ENCODE measurements at regions of chr5 and their contacts with region 1.

Region 1: DNA sequence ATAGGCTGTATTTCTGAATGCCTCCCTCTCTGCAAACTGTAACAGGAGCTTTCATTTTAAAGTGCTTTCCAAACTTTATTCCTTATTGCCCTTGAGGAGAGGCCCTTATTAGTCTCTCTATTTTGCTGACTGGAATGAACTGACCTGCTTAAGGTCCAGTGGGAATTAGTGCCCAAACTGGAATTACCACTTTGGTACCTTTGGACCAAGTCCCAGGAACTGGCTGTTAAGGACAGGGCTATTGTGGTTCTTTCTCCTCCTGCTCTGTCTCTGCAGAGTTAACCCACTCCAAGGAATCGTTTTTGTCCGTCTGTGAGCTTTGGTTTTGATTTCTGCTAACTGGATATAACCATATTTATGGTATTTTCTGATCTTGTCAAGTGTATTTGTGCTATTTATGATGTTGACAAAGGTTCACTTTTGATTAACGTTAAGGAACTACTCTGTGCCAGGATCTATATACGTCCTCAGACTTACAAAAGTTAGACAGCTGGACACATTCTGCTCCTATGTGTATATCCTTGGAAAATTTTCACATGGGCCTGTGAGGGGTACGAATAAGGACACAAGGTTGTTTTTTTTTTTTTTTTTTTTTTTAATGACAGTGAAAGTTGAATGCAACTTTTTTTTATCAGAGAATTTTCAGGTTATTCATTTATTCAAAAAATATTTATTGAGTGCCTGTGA is 189.1 kb upstream of the ANKRD55 start:
- DNase-seq: peak; percentile 60 to 82
- H3K4me3 ChIP-seq: no peak overlapping the region
- H3K27ac ChIP-seq: peak overlapping the region; percentile 2; the same call in 1 of the 2 replicates
- H3K4me1 ChIP-seq: peaks cover 24% of the 10 kb centered on the region
- H3K27me3 ChIP-seq: no peaks in the 10 kb centered on the region
- CTCF ChIP-seq: no peak

Region 2: DNA sequence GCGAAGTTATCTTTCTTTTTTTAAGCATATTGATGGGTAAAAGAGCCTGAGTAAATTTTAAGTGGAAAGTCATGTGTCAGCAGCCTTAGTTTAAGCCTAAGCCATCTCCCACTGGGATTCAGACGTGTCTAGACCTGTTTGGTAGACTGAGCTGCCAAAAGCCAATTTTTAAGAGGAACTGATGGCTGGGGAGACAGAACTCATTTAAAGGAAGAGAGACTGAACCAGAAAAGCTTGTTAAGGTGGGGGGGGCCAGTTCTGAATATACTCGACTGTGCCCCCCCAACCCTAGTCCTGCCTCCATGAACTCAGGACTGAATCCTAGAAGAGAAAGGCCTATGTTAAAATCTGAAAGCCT is 829.1 kb before region 1 on chr5:
- CTCF ChIA-PET with region 1: no interaction called
- POLR2A ChIA-PET with region 1: no interaction called
- intact Hi-C with region 1: no loop called
- DNase-seq: no peak
- H3K4me3 ChIP-seq: no peak overlapping the region
- H3K27ac ChIP-seq: no peak overlapping the region
- H3K4me1 ChIP-seq: no peaks in the 10 kb centered on the region
- H3K27me3 ChIP-seq: no peaks in the 10 kb centered on the region
- CTCF ChIP-seq: no peak

Region 3: GRCh38 chr5:56279979-56280378 is 142.2 kb before region 1 on chr5:
- CTCF ChIA-PET with region 1: no interaction called
- POLR2A ChIA-PET with region 1: no interaction called
- intact Hi-C with region 1: loop called (anchors 5 kb)
- DNase-seq: peak; percentile 38 to 76
- H3K4me3 ChIP-seq: no peak overlapping the region
- H3K27ac ChIP-seq: 0 out of 2 replicates have a peak overlapping the region, but pooled peaks have one; percentile 17
- H3K4me1 ChIP-seq: peaks cover 38% of the 10 kb centered on the region
- H3K27me3 ChIP-seq: no peaks in the 10 kb centered on the region
- CTCF ChIP-seq: no peak

Region 4: DNA sequence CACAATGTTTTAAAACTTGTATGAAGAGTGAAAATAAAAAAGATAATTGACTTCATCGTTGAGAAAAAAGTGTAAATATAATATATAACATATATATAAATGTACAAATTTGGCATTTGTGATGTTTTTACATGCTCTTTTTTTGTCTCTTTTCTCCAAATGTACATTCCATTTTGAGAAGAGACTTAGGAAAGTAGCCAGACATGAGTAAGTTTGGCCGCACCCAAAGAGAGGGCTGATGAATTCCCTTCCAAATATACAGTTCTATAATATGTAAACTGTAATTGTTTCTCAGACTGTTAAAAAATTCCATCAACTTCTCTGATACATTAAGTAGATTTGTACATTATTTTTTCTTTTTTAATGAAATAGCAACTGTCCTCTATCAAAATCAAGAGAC is 199.9 kb after region 1 on chr5:
- CTCF ChIA-PET with region 1: interaction called, 15 read pairs
- POLR2A ChIA-PET with region 1: no interaction called
- intact Hi-C with region 1: no loop called
- DNase-seq: no peak
- H3K4me3 ChIP-seq: no peak overlapping the region
- H3K27ac ChIP-seq: no peak overlapping the region
- H3K4me1 ChIP-seq: no peaks in the 10 kb centered on the region; the same call in 1 of the 2 replicates
- H3K27me3 ChIP-seq: no peaks in the 10 kb centered on the region
- CTCF ChIP-seq: no peak

Measured in PC-9 (cell line).